ENCODE measurements at regions of chr1 and their contacts with region 1.

Region 1: GRCh38 chr1:99707535-99708142 is 58.8 kb downstream of the FRRS1 start:
- DNase-seq: peak; percentile 52 to 70
- ATAC-seq: peak; percentile 72 to 93 (median 90)
- H3K4me3 ChIP-seq: no peak overlapping the region
- H3K27ac ChIP-seq: no peak overlapping the region
- H3K4me1 ChIP-seq: no peaks in the 10 kb centered on the region
- H3K27me3 ChIP-seq: no peaks in the 10 kb centered on the region
- CTCF ChIP-seq: peak; percentile 96

Region 2: GRCh38 chr1:98749152-98749756 is 958.4 kb before region 1 on chr1:
- intact Hi-C with region 1: loop called in 1 of 2 experiments (anchors 10 kb)
- DNase-seq: no peak
- ATAC-seq: no peak
- H3K4me3 ChIP-seq: no peak overlapping the region
- H3K27ac ChIP-seq: no peak overlapping the region
- H3K4me1 ChIP-seq: no peaks in the 10 kb centered on the region
- H3K27me3 ChIP-seq: no peaks in the 10 kb centered on the region
- CTCF ChIP-seq: peak; percentile 35

Region 3: GRCh38 chr1:99180343-99180808 is 527.3 kb before region 1 on chr1:
- intact Hi-C with region 1: loop called (anchors 2 kb)
- DNase-seq: peak in 1 of 2 donors; percentile 34
- ATAC-seq: peak; percentile 75 to 99 (median 92)
- H3K4me3 ChIP-seq: no peak overlapping the region
- H3K27ac ChIP-seq: no peak overlapping the region
- H3K4me1 ChIP-seq: no peaks in the 10 kb centered on the region
- H3K27me3 ChIP-seq: no peaks in the 10 kb centered on the region
- CTCF ChIP-seq: peak; percentile 89

Region 4: GRCh38 chr1:99481391-99481996 is 226.1 kb before region 1 on chr1:
- intact Hi-C with region 1: loop called (anchors 5 kb)
- DNase-seq: no peak
- ATAC-seq: peak; percentile 57 to 71 (median 60)
- H3K4me3 ChIP-seq: no peak overlapping the region
- H3K27ac ChIP-seq: no peak overlapping the region
- H3K4me1 ChIP-seq: no peaks in the 10 kb centered on the region
- H3K27me3 ChIP-seq: no peaks in the 10 kb centered on the region
- CTCF ChIP-seq: peak; percentile 79

Region 5: GRCh38 chr1:99533909-99534637 is 173.6 kb before region 1 on chr1:
- intact Hi-C with region 1: loop called in 1 of 2 experiments (anchors 5 kb)
- DNase-seq: no peak
- ATAC-seq: peak in 2 of 4 donors; percentile 46 to 63
- H3K4me3 ChIP-seq: no peak overlapping the region
- H3K27ac ChIP-seq: no peak overlapping the region
- H3K4me1 ChIP-seq: peaks cover 16% of the 10 kb centered on the region
- H3K27me3 ChIP-seq: no peaks in the 10 kb centered on the region
- CTCF ChIP-seq: no peak

Region 6: GRCh38 chr1:99887890-99888289 is 180.3 kb after region 1 on chr1:
- intact Hi-C with region 1: no loop called
- DNase-seq: no peak
- ATAC-seq: no peak
- H3K4me3 ChIP-seq: no peak overlapping the region
- H3K27ac ChIP-seq: no peak overlapping the region
- H3K4me1 ChIP-seq: no peaks in the 10 kb centered on the region
- H3K27me3 ChIP-seq: no peaks in the 10 kb centered on the region
- CTCF ChIP-seq: no peak